ENCODE measurements at regions of chr9 and their contacts with region 1.

Region 1: GRCh38 chr9:115195912-115196311 is 78.0 kb upstream of the TNC start:
- DNase-seq: no peak
- ATAC-seq: no peak
- H3K4me3 ChIP-seq: no peak overlapping the region
- H3K27ac ChIP-seq: no peak overlapping the region
- H3K4me1 ChIP-seq: peaks cover 0 to 10% (median 0%) of the 10 kb centered on the region in 9 donors
- H3K27me3 ChIP-seq: no peaks in the 10 kb centered on the region
- CTCF ChIP-seq: no peak

Region 2: DNA sequence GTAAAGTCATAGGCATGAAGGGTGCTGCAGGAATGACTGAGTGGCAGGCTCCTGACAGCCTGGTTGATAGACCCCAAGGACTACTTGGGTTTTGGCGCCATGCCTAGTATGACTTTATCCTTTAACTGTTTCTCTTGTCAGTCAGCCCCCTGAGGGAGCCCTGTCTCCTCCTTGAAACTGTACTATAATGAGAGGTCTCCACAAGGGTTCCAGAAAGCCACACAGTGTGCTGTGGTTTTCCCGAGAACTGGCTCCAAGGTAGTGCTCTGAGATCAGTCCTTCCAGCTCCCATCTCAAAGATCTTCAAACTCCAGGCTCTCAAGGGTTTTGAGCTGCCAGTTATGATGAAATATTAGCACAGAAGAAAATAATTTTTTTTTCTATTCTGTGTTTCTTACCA is 51.2 kb before region 1 on chr9:
- intact Hi-C with region 1: loop called in 1 of 10 experiments (anchors 2 kb)
- DNase-seq: no peak
- ATAC-seq: peak in 1 of 8 donors; percentile 56
- H3K4me3 ChIP-seq: no peak overlapping the region
- H3K27ac ChIP-seq: no peak overlapping the region
- H3K4me1 ChIP-seq: no peaks in the 10 kb centered on the region
- H3K27me3 ChIP-seq: peaks cover 0 to 6% (median 0%) of the 10 kb centered on the region in 7 donors
- CTCF ChIP-seq: no peak

Region 3: DNA sequence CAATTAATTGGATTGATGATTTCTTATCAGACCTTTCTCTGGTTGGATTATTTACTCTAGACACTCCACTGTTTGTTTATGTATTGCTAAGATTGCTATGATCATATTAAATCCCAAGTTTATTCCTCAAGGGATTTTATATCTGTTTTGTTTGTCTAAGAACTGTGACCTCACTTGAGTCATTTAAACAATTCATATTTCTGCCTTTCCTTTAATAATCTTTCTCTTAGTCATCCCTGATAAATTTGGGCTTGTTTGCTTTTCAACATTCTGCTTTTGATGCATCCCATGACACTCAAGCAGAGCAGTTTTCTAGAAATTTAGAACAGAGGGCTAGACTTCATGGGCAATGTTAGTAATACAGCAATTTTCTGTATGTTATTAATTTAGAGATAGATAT is 153.6 kb after region 1 on chr9:
- intact Hi-C with region 1: no loop called
- DNase-seq: no peak
- ATAC-seq: no peak
- H3K4me3 ChIP-seq: no peak overlapping the region
- H3K27ac ChIP-seq: no peak overlapping the region
- H3K4me1 ChIP-seq: no peaks in the 10 kb centered on the region
- H3K27me3 ChIP-seq: no peaks in the 10 kb centered on the region
- CTCF ChIP-seq: no peak